Sigmoid colon (tissue), 7 donors: ENCODE measurements at regions of chr15 and their contacts with region 1.

Region 1: GRCh38 chr15:56245871-56246814 is 2.5 kb upstream of the RFX7 start:
- DNase-seq: peak; percentile 90
- H3K4me3 ChIP-seq: peak overlapping the region; percentile 1 to 32 (median 24)
- H3K27ac ChIP-seq: peak overlapping the region; percentile 35 to 93 (median 78)
- H3K4me1 ChIP-seq: peaks cover 0 to 33% (median 27%) of the 10 kb centered on the region in 4 donors
- H3K27me3 ChIP-seq: no peaks in the 10 kb centered on the region
- CTCF ChIP-seq: peak; percentile 91 to 100 (median 98)
- EP300 ChIP-seq: no peak
- POLR2A ChIP-seq: no peak

Region 2: DNA sequence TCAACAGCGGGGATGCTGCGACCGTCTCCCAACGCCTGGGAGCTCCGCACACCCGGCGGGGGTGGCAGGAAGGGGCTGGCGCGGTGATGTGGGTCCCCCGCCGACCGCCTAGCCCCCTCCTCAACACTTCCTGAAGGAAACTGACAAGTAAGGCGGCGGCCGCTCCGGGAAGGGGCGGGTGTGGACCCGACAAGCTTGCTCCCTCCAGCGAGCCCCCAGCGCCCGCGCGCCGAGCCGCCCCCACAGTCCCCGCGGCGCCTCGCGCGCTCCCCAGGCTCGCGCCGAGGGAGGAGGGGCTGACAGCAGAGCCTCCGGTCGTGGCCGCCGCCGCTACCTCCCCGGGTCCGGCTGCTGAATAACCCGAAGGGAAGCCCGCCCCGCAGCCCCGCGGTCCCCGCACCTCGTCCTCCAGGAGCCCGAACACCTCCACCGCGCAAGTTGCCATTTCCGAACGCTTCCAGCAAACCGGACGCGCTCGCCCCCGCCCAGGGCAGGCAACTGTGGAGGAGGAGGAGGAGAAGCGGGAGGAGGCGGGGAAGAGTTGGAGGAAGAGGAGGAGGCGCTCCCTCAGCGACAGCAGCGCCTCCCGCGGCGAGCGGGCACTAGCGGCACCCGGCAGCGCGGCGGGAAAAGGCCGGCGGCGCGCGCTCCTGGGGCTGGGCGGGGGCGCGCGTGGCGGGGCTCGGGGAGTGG is 252.9 kb before region 1 on chr15 and contains the start of gene NEDD4:
- intact Hi-C with region 1: loop called (anchors 5 kb)
- DNase-seq: peak; percentile 93
- H3K4me3 ChIP-seq: peak within 1 kb of the TSS; percentile 81 to 92 (median 86)
- H3K27ac ChIP-seq: peak within 1 kb of the TSS; percentile 91 to 97 (median 97)
- H3K4me1 ChIP-seq: peaks cover 0 to 23% (median 18%) of the 10 kb centered on the region in 4 donors
- H3K27me3 ChIP-seq: no peaks in the 10 kb centered on the region
- CTCF ChIP-seq: peak; percentile 17 to 42 (median 23)
- EP300 ChIP-seq: no peak
- POLR2A ChIP-seq: peak in 1 of 2 donors; percentile 25
- total RNA-seq, gene NEDD4: 19.4 to 28.6 (median 25.4) TPM

Region 3: DNA sequence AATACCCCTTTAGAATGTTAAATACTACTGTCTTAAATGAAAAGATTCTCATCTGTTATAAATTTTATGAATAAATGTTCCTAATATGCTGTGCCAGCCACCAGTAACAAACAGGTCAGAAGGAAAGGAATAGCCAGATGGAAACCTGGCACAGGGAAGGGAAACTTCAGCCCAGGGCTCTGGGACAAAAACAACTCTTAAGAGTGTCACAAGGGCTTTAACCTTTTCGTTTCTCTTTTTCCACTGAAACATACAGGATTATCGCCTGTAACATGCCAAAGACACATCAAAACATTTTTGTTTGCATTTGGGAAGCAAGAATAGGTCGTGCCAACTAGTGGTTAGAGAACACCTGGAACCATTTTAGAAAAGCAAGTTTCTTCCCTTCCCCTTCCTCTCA is 143.7 kb before region 1 on chr15:
- intact Hi-C with region 1: loop called (anchors 10 kb)
- DNase-seq: no peak
- H3K4me3 ChIP-seq: no peak overlapping the region
- H3K27ac ChIP-seq: peak overlapping the region in 2 of 4 donors; percentile 14 to 15
- H3K4me1 ChIP-seq: peaks cover 0 to 34% (median 8%) of the 10 kb centered on the region in 4 donors
- H3K27me3 ChIP-seq: no peaks in the 10 kb centered on the region
- CTCF ChIP-seq: no peak
- EP300 ChIP-seq: no peak
- POLR2A ChIP-seq: no peak

Region 4: GRCh38 chr15:56365075-56365711 is 119.0 kb after region 1 on chr15 and contains the start of gene TEX9:
- intact Hi-C with region 1: loop called (anchors 5 kb)
- DNase-seq: peak; percentile 91
- H3K4me3 ChIP-seq: peak within 1 kb of the TSS; percentile 37 to 69 (median 60)
- H3K27ac ChIP-seq: peak within 1 kb of the TSS; percentile 42 to 61 (median 48)
- H3K4me1 ChIP-seq: peaks cover 0 to 10% (median 5%) of the 10 kb centered on the region in 4 donors
- H3K27me3 ChIP-seq: no peaks in the 10 kb centered on the region
- CTCF ChIP-seq: no peak
- EP300 ChIP-seq: no peak
- POLR2A ChIP-seq: no peak
- total RNA-seq, gene TEX9: 5.7 to 10.7 (median 7.3) TPM

Region 5: DNA sequence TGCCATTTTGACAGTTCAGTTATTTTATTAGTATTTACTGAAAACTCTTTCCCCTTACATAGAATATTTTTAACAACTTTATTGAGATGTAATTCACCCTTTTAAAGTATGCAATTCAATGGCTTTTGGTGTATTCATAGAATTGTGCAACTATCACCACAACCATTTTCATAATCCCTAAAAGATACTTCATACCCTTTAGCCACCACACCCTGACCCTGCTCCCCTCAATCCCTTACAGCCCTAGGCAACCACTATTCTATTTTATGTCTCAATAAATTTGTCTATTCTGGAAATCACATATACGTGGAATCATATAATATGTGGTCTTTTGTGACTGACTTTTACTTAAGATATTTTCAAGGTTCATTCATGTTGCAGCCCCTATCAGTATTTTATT is 148.8 kb after region 1 on chr15:
- intact Hi-C with region 1: no loop called
- DNase-seq: no peak
- H3K4me3 ChIP-seq: no peak overlapping the region
- H3K27ac ChIP-seq: no peak overlapping the region
- H3K4me1 ChIP-seq: no peaks in the 10 kb centered on the region
- H3K27me3 ChIP-seq: no peaks in the 10 kb centered on the region
- CTCF ChIP-seq: no peak
- EP300 ChIP-seq: no peak
- POLR2A ChIP-seq: no peak

Region 6: DNA sequence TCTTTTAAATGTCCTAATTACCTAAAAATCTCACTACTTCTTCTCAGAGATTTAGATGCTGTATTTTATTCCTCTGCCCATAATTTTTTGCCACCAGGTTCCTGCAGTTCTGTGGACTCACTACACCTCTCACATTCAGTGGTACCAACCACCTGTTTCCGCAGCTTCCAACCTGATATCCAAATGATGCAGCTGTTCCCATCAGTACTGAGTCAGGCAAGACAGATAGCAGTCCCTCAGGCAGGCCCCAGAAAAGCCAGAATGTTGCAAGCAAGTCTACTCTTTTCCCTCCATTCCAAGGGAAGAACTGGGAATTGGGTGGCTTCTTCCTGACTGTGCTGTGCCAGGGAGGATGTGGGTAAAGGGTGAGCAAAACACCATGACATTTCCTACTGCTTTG is 179.8 kb after region 1 on chr15:
- intact Hi-C with region 1: loop called (anchors 2 kb)
- DNase-seq: no peak
- H3K4me3 ChIP-seq: no peak overlapping the region
- H3K27ac ChIP-seq: no peak overlapping the region
- H3K4me1 ChIP-seq: no peaks in the 10 kb centered on the region
- H3K27me3 ChIP-seq: no peaks in the 10 kb centered on the region
- CTCF ChIP-seq: no peak
- EP300 ChIP-seq: no peak
- POLR2A ChIP-seq: no peak